ENCODE measurements at regions of chr16 and their contacts with region 1.

Region 1: GRCh38 chr16:27235055-27235937 is 32.0 kb downstream of the KDM8 start:
- DNase-seq: peak; percentile 97
- ATAC-seq: peak; percentile 63
- H3K4me3 Mint-ChIP-seq: peak overlapping the region; percentile 77
- H3K27ac Mint-ChIP-seq: peak overlapping the region; percentile 99
- H3K4me1 Mint-ChIP-seq: peaks cover 99% of the 10 kb centered on the region
- H3K27me3 Mint-ChIP-seq: no peaks in the 10 kb centered on the region

Region 2: DNA sequence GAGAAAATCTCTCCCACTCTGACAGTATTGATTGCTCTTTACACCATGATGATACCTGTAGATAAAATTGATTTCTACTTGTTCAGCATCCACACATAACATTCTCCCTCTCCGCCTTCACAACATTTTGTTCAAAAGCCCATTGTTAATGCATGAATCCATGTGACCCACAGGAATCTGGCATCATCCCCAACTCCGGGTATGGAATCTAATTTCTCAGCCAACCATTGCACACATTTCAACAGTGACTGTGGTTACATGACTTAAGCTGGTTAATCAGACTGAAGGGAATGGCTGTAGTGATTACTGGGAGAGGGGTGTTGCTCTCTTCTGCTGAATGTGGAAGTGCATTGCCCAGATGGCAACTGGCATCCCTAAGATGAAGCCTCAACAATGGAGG is 330.0 kb before region 1 on chr16:
- CTCF ChIA-PET with region 1: no interaction called
- POLR2A ChIA-PET with region 1: no interaction called
- DNase-seq: no peak
- ATAC-seq: no peak
- H3K4me3 Mint-ChIP-seq: no peak overlapping the region
- H3K27ac Mint-ChIP-seq: no peak overlapping the region
- H3K4me1 Mint-ChIP-seq: no peaks in the 10 kb centered on the region
- H3K27me3 Mint-ChIP-seq: peaks cover 4% of the 10 kb centered on the region

Region 3: GRCh38 chr16:26987597-26988010 is 247.7 kb before region 1 on chr16:
- CTCF ChIA-PET with region 1: no interaction called
- POLR2A ChIA-PET with region 1: no interaction called
- DNase-seq: no peak
- ATAC-seq: no peak
- H3K4me3 Mint-ChIP-seq: no peak overlapping the region
- H3K27ac Mint-ChIP-seq: no peak overlapping the region
- H3K4me1 Mint-ChIP-seq: no peaks in the 10 kb centered on the region
- H3K27me3 Mint-ChIP-seq: peaks cover 10% of the 10 kb centered on the region

Region 4: DNA sequence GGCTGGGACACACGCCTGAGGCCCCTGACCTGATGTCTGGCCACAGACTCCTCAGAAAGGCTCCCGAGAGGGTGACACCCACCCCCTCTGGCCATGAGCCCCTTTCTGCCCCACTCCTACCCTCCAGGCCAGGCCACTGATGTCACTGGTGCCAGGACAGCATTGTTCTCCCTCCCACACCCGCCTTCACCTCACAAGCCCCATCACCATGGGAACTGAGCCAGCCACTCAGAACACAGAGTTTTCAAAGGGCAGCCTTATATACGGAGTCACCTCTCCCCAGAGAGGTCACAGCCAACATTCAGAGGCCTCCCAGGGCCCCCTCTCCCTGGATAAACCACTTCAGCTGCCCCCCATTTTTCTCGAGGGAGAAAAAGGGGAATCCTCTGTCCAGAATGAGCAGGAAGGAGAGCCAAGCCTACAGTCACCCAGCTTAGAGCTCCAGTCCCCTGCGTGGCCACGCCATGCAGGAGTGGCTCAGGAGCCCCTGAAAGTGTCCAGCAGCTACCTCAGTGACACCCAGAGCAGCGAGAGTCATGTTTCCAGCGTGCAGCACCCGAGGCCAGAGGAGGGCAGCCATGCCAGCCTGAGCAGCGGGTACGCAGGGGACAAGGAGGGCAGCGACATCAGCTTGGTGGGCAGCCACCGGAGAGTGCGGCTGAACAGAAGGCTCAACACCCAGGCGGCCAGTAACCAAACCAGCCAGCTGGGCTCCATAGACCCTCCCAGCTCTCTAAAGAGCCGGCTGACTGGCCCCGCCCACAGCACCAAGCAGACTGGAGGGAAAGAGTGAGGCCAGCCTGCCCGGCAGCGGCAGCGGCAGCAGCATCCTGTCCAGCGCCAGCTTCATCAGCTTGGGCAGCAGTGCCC is 168.4 kb before region 1 on chr16 and contains the start of gene C16orf82:
- CTCF ChIA-PET with region 1: no interaction called
- POLR2A ChIA-PET with region 1: no interaction called
- DNase-seq: no peak
- ATAC-seq: no peak
- H3K4me3 Mint-ChIP-seq: no peak within 1 kb of the TSS
- H3K27ac Mint-ChIP-seq: no peak within 1 kb of the TSS
- H3K4me1 Mint-ChIP-seq: no peaks in the 10 kb centered on the region
- H3K27me3 Mint-ChIP-seq: peaks cover 6% of the 10 kb centered on the region
- total RNA-seq, gene C16orf82: not detected

Region 5: DNA sequence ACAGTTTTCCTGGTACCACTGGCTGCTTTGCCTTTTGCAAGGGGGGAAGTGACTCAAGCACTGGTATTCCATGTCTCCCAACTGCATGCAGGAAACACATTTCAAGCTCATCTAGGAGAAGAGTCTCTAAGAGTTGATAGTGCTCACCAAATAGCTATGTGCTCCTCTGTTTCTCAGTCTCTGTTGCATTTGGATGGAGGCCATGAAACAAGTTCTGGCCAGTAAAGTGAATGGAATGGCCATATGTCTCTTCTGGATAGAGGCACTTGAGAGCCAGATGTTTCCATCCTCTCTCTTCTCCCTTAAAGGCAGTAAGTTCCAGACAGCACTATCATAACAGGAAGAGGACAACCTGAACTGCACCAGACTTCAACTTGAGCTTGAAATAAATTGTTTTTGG is 108.0 kb before region 1 on chr16:
- CTCF ChIA-PET with region 1: no interaction called
- POLR2A ChIA-PET with region 1: no interaction called
- DNase-seq: no peak
- ATAC-seq: no peak
- H3K4me3 Mint-ChIP-seq: no peak overlapping the region
- H3K27ac Mint-ChIP-seq: no peak overlapping the region
- H3K4me1 Mint-ChIP-seq: no peaks in the 10 kb centered on the region
- H3K27me3 Mint-ChIP-seq: peaks cover 6% of the 10 kb centered on the region

Region 6: DNA sequence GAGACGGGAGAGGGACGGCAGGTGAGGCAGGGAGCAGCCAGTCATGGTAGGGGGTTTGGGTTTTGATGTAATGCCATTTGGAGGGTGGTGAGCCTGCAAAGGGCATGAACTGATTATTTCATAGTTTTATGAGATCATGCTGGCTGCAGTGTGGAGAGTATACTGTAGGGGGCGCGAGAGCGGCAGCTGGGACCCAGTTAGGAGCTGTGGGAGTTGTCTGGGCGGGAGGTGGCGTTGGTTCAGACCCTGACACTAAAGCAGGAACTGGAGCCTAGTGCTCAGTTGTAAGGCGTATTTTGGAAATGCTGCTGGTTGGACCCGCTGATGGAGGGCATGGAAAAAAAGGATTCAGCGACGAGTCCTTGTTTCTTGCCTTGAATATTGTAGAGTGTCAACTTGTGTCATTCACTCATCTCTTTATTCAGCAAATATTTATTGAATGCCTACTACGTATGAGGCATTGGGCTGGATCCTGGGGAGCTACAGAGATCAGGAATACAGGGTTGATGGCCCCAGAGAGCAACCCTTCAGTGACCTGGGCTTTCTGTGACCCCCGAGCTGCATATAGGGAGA is 55.7 kb before region 1 on chr16:
- CTCF ChIA-PET with region 1: interaction called, 136 read pairs
- POLR2A ChIA-PET with region 1: interaction called, 20 read pairs
- DNase-seq: peak; percentile 95
- ATAC-seq: peak; percentile 95
- H3K4me3 Mint-ChIP-seq: no peak overlapping the region
- H3K27ac Mint-ChIP-seq: peak overlapping the region; percentile 73
- H3K4me1 Mint-ChIP-seq: peaks cover 37% of the 10 kb centered on the region
- H3K27me3 Mint-ChIP-seq: peaks cover 8% of the 10 kb centered on the region

Region 7: GRCh38 chr16:27248036-27248435 is 12.7 kb after region 1 on chr16:
- CTCF ChIA-PET with region 1: interaction called, 20 read pairs
- POLR2A ChIA-PET with region 1: interaction called, 33 read pairs
- DNase-seq: no peak
- ATAC-seq: no peak
- H3K4me3 Mint-ChIP-seq: no peak overlapping the region
- H3K27ac Mint-ChIP-seq: no peak overlapping the region
- H3K4me1 Mint-ChIP-seq: peaks cover 78% of the 10 kb centered on the region
- H3K27me3 Mint-ChIP-seq: no peaks in the 10 kb centered on the region

Region 8: DNA sequence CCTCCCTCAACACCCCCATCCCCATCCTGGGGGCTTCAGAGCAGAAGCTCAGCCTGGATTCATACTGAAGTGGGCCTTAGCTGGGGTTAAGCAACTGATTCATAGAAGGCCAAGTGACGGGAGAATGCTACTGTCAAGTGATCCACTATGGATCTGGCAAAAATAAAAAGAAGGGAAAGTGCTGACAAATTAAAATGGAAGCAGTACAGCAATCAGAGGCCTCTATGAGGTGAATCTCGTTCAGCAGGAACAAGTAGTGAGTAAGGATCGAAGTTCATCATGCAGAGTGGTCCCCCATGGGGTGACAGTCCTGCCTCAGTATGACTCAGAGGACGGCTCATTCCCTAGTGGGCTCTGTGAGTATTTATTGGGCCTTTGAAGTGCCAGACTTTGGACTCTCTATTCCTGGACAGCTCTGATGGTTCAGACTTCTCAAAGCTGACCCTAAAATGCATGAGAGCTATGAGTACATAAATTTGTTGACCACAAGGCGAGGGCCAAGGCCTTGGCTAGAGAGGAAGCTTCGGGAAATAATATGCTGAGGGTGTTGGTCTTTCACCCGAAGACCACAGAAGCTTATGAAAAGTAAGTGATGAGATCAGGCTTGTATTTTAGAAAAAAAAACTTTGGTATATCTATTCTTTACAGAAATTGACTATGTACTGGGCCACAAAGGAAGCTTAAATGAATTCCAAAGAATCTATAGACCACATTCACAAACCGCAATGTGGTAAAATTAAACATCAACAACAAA is 38.6 kb after region 1 on chr16:
- CTCF ChIA-PET with region 1: interaction called, 40 read pairs
- POLR2A ChIA-PET with region 1: interaction called, 31 read pairs
- DNase-seq: peak; percentile 56
- ATAC-seq: peak; percentile 79
- H3K4me3 Mint-ChIP-seq: peak overlapping the region; percentile 47
- H3K27ac Mint-ChIP-seq: peak overlapping the region; percentile 92
- H3K4me1 Mint-ChIP-seq: peaks cover 66% of the 10 kb centered on the region
- H3K27me3 Mint-ChIP-seq: no peaks in the 10 kb centered on the region

Region 9: GRCh38 chr16:27326738-27327585 is 91.7 kb after region 1 on chr16:
- CTCF ChIA-PET with region 1: interaction called, 27 read pairs
- POLR2A ChIA-PET with region 1: interaction called, 222 read pairs
- DNase-seq: peak; percentile 62
- ATAC-seq: peak; percentile 76
- H3K4me3 Mint-ChIP-seq: peak overlapping the region; percentile 63
- H3K27ac Mint-ChIP-seq: peak overlapping the region; percentile 89
- H3K4me1 Mint-ChIP-seq: peaks cover 82% of the 10 kb centered on the region
- H3K27me3 Mint-ChIP-seq: no peaks in the 10 kb centered on the region

Region 10: DNA sequence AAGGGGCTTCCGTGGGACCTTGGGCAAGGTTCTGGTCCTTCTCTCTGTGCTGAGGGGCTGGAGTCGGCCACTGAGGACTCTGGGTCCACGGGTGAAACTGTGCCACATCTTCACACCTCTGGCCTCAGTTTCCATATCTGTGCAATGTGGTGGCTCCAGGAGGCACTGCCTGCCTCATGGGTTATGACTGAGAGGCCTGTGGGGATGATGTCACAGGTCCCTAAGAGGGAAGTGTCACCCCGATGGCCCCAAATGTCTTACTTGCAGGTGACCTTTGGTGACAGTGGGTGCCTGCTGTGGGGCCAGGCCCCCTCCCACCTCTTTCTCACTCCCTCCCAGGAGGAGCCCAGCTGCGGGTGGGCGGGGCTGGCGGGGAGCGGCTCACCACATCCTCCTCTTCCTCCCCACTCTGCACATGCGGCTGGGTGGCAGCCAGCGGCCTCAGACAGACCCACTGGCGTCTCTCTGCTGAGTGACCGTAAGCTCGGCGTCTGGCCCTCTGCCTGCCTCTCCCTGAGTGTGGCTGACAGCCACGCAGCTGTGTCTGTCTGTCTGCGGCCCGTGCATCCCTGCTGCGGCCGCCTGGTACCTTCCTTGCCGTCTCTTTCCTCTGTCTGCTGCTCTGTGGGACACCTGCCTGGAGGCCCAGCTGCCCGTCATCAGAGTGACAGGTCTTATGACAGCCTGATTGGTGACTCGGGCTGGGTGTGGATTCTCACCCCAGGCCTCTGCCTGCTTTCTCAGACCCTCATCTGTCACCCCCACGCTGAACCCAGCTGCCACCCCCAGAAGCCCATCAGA is 166.7 kb after region 1 on chr16 and contains the start of gene IL21R:
- CTCF ChIA-PET with region 1: interaction called, 23 read pairs
- POLR2A ChIA-PET with region 1: interaction called, 17 read pairs
- DNase-seq: peak; percentile 90
- ATAC-seq: peak; percentile 81
- H3K4me3 Mint-ChIP-seq: peak within 1 kb of the TSS; percentile 97
- H3K27ac Mint-ChIP-seq: peak within 1 kb of the TSS; percentile 94
- H3K4me1 Mint-ChIP-seq: peaks cover 68% of the 10 kb centered on the region
- H3K27me3 Mint-ChIP-seq: no peaks in the 10 kb centered on the region
- total RNA-seq, gene IL21R: 23.5 to 24.2 TPM

Region 11: DNA sequence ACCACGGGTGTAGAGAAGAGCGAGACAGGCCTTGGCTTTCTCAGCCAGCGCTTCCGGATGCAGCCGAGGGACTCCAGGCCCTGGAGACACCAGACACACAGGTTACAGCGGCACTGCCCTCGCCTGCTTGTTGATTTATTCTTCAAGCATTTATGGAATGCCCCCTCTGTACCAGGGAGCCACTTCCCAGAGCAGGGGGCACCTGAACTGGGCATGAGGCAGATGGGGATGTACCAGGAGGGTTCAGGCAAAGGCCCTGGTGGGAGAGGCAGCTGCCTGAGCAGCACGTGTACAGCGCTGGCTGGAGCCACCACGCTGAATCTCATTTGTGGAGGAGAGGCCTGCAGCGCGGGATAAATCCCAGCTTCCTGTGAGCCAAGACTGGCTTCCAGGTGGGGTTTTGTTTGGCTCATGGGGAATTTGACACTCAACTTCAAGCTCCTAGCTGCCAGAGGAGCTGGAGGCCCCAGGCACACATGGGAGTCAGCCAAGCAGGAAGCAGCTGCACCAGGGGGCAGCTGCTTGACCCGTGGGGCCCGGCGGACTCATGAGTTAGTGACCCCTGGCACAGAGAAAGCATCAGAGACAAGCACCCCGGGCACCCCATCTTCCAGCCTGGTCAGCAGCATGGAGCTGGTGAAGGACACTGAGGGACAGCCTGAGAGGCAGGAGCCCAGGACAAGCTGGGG is 226.3 kb after region 1 on chr16:
- CTCF ChIA-PET with region 1: interaction called, 18 read pairs
- POLR2A ChIA-PET with region 1: interaction called, 3 read pairs
- DNase-seq: no peak
- ATAC-seq: no peak
- H3K4me3 Mint-ChIP-seq: no peak overlapping the region
- H3K27ac Mint-ChIP-seq: peak overlapping the region; percentile 34
- H3K4me1 Mint-ChIP-seq: peaks cover 61% of the 10 kb centered on the region
- H3K27me3 Mint-ChIP-seq: no peaks in the 10 kb centered on the region

Measured in activated CD8-positive, alpha-beta T cell treated with anti-CD3 and anti-CD28 coated beads, Interleukin-2, amount 10 ng/mL, durations not matched to agents 7 days and 5 days (primary cell).